IMR-90 (cell line): ENCODE measurements at regions of chr10 and their contacts with region 1.

Region 1: DNA sequence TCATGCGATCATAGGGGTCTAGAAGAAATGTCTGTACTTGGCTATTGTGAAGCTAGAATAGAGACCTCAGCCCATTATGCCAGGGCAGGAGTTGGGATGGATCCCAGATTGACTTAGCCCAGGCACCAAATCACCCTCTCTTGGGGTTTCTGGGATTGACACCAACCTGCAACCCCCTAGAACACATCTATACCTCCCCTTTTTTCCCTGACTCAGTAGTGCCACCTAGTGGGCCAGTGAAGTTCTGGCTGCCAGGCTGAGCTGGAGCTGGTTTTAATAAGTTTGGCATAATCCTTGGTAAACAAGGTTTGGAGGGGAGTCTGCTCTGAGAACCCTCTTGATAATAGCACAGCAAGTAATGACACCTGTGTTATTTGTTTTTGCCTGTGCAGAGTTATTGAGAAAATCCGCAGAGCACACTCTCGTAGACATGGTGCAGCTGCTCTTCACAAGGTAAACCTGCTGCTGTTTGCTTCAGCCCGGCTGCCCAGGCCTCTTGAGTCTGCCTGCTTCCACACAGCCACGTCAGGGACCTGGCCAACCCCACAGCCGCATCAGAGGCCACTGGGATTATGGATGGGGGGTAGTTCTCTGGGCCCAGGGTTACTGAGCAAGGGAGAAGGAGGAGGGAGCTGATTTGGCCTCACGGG is 43.3 kb upstream of the NFKB2 start:
- DNase-seq: peak; percentile 54
- ATAC-seq: peak; percentile 92
- H3K4me3 ChIP-seq: no peak overlapping the region
- H3K27ac ChIP-seq: no peak overlapping the region
- H3K4me1 ChIP-seq: no peaks in the 10 kb centered on the region
- H3K27me3 ChIP-seq: no peaks in the 10 kb centered on the region
- CTCF ChIP-seq: peak; percentile 82
- POLR2A ChIP-seq: no peak
- RAD21 ChIP-seq: peak; percentile 81

Region 2: DNA sequence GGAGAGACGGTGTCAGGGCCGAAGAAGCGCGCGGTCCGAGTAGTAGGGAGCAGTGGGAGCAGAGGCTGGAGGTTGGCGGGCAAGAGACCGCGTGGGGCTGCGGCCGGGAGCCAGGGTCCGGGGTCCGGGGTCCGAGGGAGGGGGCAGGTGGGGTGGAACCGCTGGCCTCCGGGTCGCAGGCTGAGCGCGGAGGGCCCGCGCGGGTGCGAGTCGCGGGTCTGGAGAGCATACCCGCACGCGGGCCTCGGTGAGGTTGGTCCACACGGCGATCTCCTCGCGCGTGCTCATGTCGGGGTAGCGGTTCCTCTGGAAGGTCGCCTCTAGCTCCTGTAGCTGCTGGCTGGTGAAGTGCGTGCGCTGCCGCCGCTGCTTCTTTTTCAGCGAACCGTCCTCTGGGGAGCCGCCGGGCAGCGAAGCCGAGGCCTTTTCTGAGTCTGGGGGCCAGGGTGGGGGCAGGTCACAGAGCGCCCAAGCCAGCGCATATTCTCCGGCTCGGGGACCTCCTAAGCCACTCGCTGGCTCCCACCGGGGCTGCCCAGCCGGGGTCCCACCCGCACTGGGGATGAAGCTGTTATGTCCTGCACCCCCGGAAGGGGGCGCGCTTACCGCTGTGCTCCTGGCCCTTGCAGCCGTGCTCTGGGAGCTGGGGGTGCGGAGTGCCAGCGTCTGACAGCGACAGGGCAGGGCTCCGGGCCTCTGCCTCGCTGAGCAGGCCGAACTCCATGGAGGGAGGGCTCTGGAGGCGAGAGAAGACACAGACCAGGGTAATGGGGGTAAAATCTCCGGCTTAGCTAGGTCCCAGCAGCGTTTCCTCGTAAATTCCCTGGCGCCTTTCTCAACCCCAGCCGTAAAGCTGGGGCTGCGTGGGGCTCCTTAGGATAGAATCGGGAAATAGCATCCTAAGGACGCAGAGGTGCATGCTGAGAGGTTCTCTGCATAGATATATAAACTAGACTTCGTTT is 120.6 kb before region 1 on chr10:
- CTCF ChIA-PET with region 1: interaction called, 59 read pairs
- POLR2A ChIA-PET with region 1: no interaction called
- dilution Hi-C with region 1: no loop called
- in situ Hi-C with region 1: loop called (anchors 5 kb)
- intact Hi-C with region 1: loop called (anchors 1 kb)
- DNase-seq: no peak
- ATAC-seq: 0 out of 2 replicates have a peak, but pooled peaks have one; percentile 18
- H3K4me3 ChIP-seq: no peak overlapping the region; the same call in 1 of the 2 replicates
- H3K27ac ChIP-seq: no peak overlapping the region
- H3K4me1 ChIP-seq: peaks cover 4% of the 10 kb centered on the region
- H3K27me3 ChIP-seq: peaks cover 44% of the 10 kb centered on the region; the same call in 1 of the 2 replicates
- CTCF ChIP-seq: peak; percentile 62
- POLR2A ChIP-seq: no peak
- RAD21 ChIP-seq: peak; percentile 61

Region 3: GRCh38 chr10:102399217-102400089 is 47.3 kb after region 1 on chr10:
- CTCF ChIA-PET with region 1: interaction called, 12 read pairs
- POLR2A ChIA-PET with region 1: no interaction called
- dilution Hi-C with region 1: no loop called
- in situ Hi-C with region 1: no loop called
- intact Hi-C with region 1: no loop called
- DNase-seq: peak; percentile 82
- ATAC-seq: peak; percentile 76
- H3K4me3 ChIP-seq: peak overlapping the region; percentile 39
- H3K27ac ChIP-seq: peak overlapping the region; percentile 46
- H3K4me1 ChIP-seq: peaks cover 17% of the 10 kb centered on the region
- H3K27me3 ChIP-seq: no peaks in the 10 kb centered on the region
- CTCF ChIP-seq: peak; percentile 95
- POLR2A ChIP-seq: no peak
- RAD21 ChIP-seq: peak; percentile 68